ENCODE measurements at regions of chr7 and their contacts with region 1.

Region 1: DNA sequence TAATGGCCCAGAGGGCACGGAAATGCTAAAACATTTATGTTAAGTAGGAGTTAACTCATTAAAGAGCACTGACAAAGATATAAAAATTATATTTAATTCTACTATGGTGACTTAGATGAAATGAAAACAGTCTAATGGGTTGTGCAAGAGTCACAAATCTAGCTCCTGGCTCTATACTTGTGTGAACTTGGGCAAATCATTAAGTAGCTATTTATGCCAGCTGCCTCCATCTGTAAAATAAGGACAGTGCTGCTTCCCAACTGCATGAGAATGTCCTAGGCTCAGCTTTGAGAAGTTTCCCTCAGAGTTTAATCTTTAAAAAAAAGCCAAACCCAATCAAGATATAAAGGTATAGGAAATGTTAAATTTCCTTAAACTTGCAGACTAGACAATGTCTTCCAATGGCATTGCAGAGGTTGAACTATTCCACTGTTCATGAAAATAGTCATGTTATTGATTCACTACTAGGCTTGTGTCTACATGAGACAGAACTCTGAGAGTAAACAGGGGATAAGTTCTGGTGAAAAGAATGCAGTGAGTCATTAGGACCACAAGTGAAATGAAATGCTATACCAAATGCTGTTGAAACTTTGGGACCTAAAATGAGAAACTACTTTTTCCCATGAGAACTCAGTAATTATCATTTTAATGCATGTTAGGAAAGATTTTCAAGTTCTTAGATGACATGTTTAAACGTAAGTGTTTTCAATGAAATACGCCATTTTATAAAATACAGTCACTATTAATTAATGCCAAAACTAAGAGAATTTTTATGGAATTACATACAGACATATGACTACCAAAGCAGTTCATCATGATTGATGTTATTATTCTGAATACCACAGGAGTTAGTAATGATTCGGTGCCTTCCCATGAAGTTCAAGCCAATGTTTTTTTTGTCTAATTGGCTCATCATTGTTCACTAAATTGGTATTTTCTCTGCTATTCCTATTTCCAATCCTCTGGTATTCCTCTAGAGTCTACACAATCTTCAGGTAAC is 84.2 kb downstream of the CDK6 start:
- DNase-seq: no peak
- H3K4me3 ChIP-seq: no peak overlapping the region
- H3K27ac ChIP-seq: no peak overlapping the region
- H3K4me1 ChIP-seq: peaks cover 0 to 10% of the 10 kb centered on the region in 2 donors
- H3K27me3 ChIP-seq: no peaks in the 10 kb centered on the region
- CTCF ChIP-seq: no peak

Region 2: DNA sequence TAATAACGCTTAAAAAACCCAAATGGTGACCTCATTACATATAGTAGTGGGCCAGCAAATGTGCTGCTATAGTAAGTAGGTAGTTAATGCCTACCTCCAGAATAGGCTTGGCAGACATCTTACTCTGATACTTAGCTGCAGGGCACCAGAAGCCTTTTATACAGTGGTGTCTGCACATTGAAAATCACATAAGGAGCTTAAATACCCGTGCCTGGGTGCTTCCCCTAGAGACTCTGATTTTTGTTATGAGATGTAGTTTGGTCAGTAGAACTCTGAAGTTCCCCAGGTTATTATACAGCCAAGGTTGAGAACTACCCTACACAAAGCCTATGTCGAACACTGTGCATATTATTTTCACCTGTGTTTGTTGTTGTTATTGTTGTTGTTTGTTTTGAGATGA is 459.2 kb before region 1 on chr7:
- intact Hi-C with region 1: no loop called
- DNase-seq: no peak
- H3K4me3 ChIP-seq: no peak overlapping the region
- H3K27ac ChIP-seq: no peak overlapping the region
- H3K4me1 ChIP-seq: peaks cover 0 to 13% of the 10 kb centered on the region in 2 donors
- H3K27me3 ChIP-seq: no peaks in the 10 kb centered on the region
- CTCF ChIP-seq: no peak

Region 3: GRCh38 chr7:92797693-92798092 is 45.5 kb after region 1 on chr7:
- intact Hi-C with region 1: loop called (anchors 5 kb)
- DNase-seq: no peak
- H3K4me3 ChIP-seq: no peak overlapping the region
- H3K27ac ChIP-seq: peak overlapping the region in 1 of 2 donors; percentile 6
- H3K4me1 ChIP-seq: peaks cover 0 to 13% of the 10 kb centered on the region in 2 donors
- H3K27me3 ChIP-seq: no peaks in the 10 kb centered on the region
- CTCF ChIP-seq: no peak

Region 4: DNA sequence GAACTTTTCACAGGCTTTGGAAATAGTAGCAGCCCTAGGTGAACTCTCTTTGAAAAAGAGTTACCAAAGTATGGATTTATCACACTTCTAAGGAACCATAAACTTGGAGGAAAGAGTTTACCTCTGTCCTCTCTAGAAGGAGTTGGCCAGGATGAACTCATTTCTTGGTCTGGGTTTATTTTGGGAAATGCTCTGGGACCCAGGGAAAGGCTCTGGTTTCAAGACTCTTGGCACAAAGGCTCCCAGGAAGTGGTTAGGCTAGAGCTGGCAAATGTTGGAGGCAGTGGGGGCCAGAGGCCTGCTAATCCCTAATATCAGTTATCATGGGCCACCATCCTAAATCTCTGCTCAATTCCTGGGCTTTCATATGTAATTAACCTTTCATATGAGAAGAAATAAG is 120.5 kb after region 1 on chr7:
- intact Hi-C with region 1: no loop called
- DNase-seq: no peak
- H3K4me3 ChIP-seq: no peak overlapping the region
- H3K27ac ChIP-seq: peak overlapping the region in 1 of 2 donors; percentile 27
- H3K4me1 ChIP-seq: no peaks in the 10 kb centered on the region
- H3K27me3 ChIP-seq: no peaks in the 10 kb centered on the region
- CTCF ChIP-seq: no peak